ENCODE measurements at regions of chr12 and their contacts with region 1.

Region 1: GRCh38 chr12:80472902-80473500 is 29.0 kb downstream of the PTPRQ start:
- DNase-seq: no peak
- H3K4me3 ChIP-seq: no peak overlapping the region
- H3K27ac ChIP-seq: no peak overlapping the region
- H3K4me1 ChIP-seq: no peaks in the 10 kb centered on the region
- H3K27me3 ChIP-seq: no peaks in the 10 kb centered on the region
- CTCF ChIP-seq: peak; percentile 50

Region 2: DNA sequence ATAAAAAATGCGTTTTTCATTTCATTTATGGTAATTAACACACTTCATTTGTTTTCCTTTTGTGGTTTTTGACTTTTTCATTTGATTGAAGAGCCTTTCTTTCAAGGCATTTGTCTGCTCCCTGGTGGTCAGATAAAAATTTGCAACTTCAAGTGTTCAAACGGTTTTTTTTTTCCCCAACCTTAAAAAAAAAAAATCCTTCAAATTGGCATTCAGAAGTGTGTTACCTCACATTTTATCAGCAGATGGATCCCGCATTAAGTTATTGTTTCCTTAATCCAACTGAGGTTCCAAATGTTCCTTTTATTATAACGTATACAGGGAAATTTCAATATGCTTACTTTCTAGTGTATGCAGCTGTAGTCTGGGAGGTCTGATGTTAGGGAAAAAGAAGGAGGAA is 290.9 kb after region 1 on chr12:
- intact Hi-C with region 1: loop called (anchors 10 kb)
- DNase-seq: no peak
- H3K4me3 ChIP-seq: no peak overlapping the region
- H3K27ac ChIP-seq: no peak overlapping the region
- H3K4me1 ChIP-seq: no peaks in the 10 kb centered on the region
- H3K27me3 ChIP-seq: no peaks in the 10 kb centered on the region
- CTCF ChIP-seq: peak; percentile 71

Region 3: GRCh38 chr12:81114226-81114625 is 641.2 kb after region 1 on chr12:
- intact Hi-C with region 1: no loop called
- DNase-seq: no peak
- H3K4me3 ChIP-seq: no peak overlapping the region
- H3K27ac ChIP-seq: no peak overlapping the region
- H3K4me1 ChIP-seq: no peaks in the 10 kb centered on the region
- H3K27me3 ChIP-seq: no peaks in the 10 kb centered on the region
- CTCF ChIP-seq: no peak

Measured in left ventricle myocardium inferior (tissue), 1 donor.